AG04449 (cell line): ENCODE measurements at regions of chr1 and their contacts with region 1.

Region 1: GRCh38 chr1:201436393-201436792 is 14.9 kb upstream of the TNNI1 start:
- DNase-seq: no peak
- H3K4me3 ChIP-seq: no peak overlapping the region
- CTCF ChIP-seq: peak; percentile 46

Region 2: GRCh38 chr1:201408176-201408833 is 28.1 kb before region 1 on chr1:
- CTCF ChIA-PET with region 1: interaction called, 27 read pairs
- POLR2A ChIA-PET with region 1: no interaction called
- DNase-seq: peak; percentile 10
- H3K4me3 ChIP-seq: no peak overlapping the region
- CTCF ChIP-seq: peak; percentile 99

Region 3: GRCh38 chr1:201447911-201448871 is 11.8 kb after region 1 on chr1:
- CTCF ChIA-PET with region 1: interaction called, 179 read pairs
- POLR2A ChIA-PET with region 1: no interaction called
- DNase-seq: no peak
- H3K4me3 ChIP-seq: no peak overlapping the region
- CTCF ChIP-seq: peak; percentile 90

Region 4: DNA sequence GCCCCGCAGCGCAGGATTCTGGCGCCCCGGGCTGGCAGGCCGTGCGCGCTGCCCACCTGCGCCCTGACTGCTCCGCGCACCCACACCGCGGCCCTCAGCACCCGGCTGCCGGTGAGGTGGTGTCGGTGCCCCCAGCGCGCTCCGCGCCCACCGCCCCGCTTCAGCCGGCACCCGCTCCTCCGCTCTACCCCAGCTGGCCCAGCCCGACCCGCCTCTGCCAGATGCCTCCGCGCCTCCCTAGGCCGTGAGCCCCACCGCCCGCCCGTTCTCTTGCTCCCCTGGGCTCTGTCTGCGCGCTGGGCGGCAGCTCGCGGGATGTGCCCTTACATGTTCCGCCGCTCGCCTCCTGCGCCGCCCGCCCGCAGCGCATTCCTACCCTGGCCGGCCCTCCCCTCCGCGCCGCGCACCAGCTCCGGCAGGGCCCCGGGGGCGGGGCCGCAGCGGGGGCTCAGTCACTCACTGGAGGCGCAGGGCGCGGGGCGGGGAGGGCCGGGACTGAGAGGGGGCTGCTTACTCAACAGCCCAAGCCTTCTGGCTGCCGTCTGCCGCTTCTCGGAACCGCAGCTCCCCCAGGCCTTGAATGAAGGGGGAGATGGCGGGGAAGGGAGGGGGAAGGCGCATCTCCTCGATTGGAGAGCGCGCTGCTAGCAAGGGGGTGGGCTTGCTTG is 32.6 kb after region 1 on chr1 and contains the start of gene PHLDA3:
- CTCF ChIA-PET with region 1: interaction called, 20 read pairs
- POLR2A ChIA-PET with region 1: interaction called, 5 read pairs
- DNase-seq: no peak
- H3K4me3 ChIP-seq: peak within 1 kb of the TSS; percentile 97
- CTCF ChIP-seq: no peak

Region 5: DNA sequence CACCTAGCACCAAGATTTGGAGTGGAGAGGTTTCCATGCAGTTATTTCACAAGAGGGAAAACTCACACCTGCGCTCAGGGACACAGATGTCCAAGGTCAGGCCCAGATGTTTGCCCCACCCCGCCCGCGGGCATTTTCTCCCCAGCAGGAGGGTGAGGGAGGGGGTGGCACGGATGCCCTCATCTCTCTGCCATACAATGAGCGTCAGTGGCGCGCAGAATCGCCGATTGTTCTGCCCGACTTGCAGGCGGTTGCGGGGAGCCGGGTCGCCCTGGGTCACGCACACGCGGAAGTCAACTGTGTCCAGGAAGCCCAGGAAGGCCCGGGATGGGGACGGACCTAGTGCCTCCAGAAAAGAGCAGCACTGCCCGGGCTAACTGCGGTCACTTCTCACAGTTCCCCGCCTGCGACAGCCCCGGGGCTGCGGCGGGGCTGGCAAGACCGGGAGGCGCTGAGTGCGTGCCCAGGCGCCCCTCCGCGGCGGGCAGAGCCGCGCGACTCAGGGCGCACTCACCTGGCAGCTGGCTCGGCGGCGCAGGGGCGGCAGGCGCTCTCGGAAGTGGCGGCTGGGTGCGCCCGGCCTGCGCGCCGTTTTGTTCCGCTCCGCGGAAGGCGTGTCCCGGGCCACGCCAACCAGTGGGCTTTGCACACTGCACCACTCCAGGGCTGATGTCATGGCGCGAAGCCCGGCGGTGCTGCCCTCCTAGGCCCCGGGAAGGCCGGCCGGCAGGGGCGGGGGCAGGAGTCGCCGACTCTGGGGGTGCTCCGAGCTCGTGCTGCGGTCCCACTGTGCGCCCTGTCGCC is 70.4 kb after region 1 on chr1 and contains the start of gene CSRP1:
- CTCF ChIA-PET with region 1: interaction called, 248 read pairs
- POLR2A ChIA-PET with region 1: interaction called, 5 read pairs
- DNase-seq: no peak
- H3K4me3 ChIP-seq: peak within 1 kb of the TSS; percentile 83
- CTCF ChIP-seq: no peak